ENCODE measurements at regions of chr11 and their contacts with region 1.

Region 1: GRCh38 chr11:95641495-95641894 is 148.1 kb downstream of the FAM76B start:
- DNase-seq: peak; percentile 49 to 58
- ATAC-seq: peak; percentile 56
- H3K4me3 ChIP-seq: no peak overlapping the region
- H3K27ac ChIP-seq: no peak overlapping the region
- H3K4me1 ChIP-seq: peaks cover 0 to 7% of the 10 kb centered on the region in 2 donors
- H3K27me3 ChIP-seq: no peaks in the 10 kb centered on the region

Region 2: GRCh38 chr11:95545116-95545875 is 96.2 kb before region 1 on chr11:
- intact Hi-C with region 1: no loop called
- DNase-seq: no peak
- ATAC-seq: no peak
- H3K4me3 ChIP-seq: no peak overlapping the region
- H3K27ac ChIP-seq: no peak overlapping the region
- H3K4me1 ChIP-seq: peaks cover 0 to 3% of the 10 kb centered on the region in 2 donors
- H3K27me3 ChIP-seq: no peaks in the 10 kb centered on the region

Region 3: DNA sequence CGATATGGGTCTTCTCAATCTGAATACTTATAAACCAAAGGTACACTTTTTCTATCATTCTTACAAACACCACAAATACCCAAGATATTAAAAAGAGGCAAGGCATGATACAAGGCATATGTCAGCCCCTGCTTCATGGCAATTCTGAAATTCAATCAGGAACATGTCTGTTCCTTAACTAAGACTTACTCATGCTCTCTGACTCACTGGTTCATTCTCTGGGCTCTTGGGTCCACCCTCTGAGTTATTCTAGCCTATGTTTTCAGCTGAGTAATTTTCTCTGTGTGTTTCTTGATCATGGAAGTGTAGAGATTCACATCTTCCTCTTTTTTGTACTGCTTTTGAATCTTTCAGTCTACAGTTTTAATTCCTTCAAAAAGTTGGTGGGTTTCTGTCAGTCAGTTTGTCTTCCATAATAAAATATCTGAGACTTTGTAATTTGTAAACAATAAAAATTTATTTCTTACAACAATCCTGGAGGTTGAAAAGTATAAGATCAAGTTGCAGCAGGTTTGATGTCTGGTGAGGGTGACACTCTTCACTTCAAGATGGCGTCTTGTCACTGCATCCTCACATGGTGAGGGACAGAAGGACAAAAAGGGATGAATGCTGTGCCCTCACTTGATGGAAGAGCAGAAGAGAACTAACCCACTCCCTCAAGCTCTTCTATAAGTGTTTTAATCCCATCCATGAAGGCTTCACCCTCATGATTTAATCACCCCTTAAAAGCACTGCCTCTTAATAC is 63.6 kb before region 1 on chr11:
- intact Hi-C with region 1: loop called in 1 of 2 experiments (anchors 5 kb)
- DNase-seq: no peak
- ATAC-seq: no peak
- H3K4me3 ChIP-seq: no peak overlapping the region
- H3K27ac ChIP-seq: no peak overlapping the region
- H3K4me1 ChIP-seq: peaks cover 7 to 8% of the 10 kb centered on the region in 2 donors
- H3K27me3 ChIP-seq: no peaks in the 10 kb centered on the region

Region 4: GRCh38 chr11:95592471-95592870 is 49.0 kb before region 1 on chr11:
- intact Hi-C with region 1: loop called in 1 of 2 experiments (anchors 10 kb)
- DNase-seq: peak in 1 of 2 donors; percentile 44
- ATAC-seq: peak; percentile 20
- H3K4me3 ChIP-seq: no peak overlapping the region
- H3K27ac ChIP-seq: peak overlapping the region in 1 of 2 donors; percentile 51
- H3K4me1 ChIP-seq: peaks cover 5 to 9% of the 10 kb centered on the region in 2 donors
- H3K27me3 ChIP-seq: no peaks in the 10 kb centered on the region

Region 5: GRCh38 chr11:95699631-95700470 is 58.4 kb after region 1 on chr11:
- intact Hi-C with region 1: loop called in 1 of 2 experiments (anchors 5 kb)
- DNase-seq: no peak
- ATAC-seq: no peak
- H3K4me3 ChIP-seq: no peak overlapping the region
- H3K27ac ChIP-seq: no peak overlapping the region
- H3K4me1 ChIP-seq: no peaks in the 10 kb centered on the region
- H3K27me3 ChIP-seq: no peaks in the 10 kb centered on the region